Activated CD8-positive, alpha-beta memory T cell treated with anti-CD3 and anti-CD28 coated beads, Interleukin-2, amount 10 ng/mL, durations not matched to agents 7 days and 5 days (primary cell): ENCODE measurements at regions of chr5 and their contacts with region 1.

Region 1: GRCh38 chr5:87069974-87070624 is 197.6 kb upstream of the RASA1 start:
- DNase-seq: peak; percentile 43
- ATAC-seq: no peak
- H3K4me3 Mint-ChIP-seq: no peak overlapping the region
- H3K27ac Mint-ChIP-seq: peak overlapping the region; percentile 51
- H3K4me1 Mint-ChIP-seq: peaks cover 29% of the 10 kb centered on the region
- H3K27me3 Mint-ChIP-seq: no peaks in the 10 kb centered on the region

Region 2: GRCh38 chr5:86964889-86965288 is 105.2 kb before region 1 on chr5:
- CTCF ChIA-PET with region 1: no interaction called
- DNase-seq: no peak
- ATAC-seq: no peak
- H3K4me3 Mint-ChIP-seq: no peak overlapping the region
- H3K27ac Mint-ChIP-seq: no peak overlapping the region
- H3K4me1 Mint-ChIP-seq: peaks cover 4% of the 10 kb centered on the region
- H3K27me3 Mint-ChIP-seq: peaks cover 4% of the 10 kb centered on the region

Region 3: DNA sequence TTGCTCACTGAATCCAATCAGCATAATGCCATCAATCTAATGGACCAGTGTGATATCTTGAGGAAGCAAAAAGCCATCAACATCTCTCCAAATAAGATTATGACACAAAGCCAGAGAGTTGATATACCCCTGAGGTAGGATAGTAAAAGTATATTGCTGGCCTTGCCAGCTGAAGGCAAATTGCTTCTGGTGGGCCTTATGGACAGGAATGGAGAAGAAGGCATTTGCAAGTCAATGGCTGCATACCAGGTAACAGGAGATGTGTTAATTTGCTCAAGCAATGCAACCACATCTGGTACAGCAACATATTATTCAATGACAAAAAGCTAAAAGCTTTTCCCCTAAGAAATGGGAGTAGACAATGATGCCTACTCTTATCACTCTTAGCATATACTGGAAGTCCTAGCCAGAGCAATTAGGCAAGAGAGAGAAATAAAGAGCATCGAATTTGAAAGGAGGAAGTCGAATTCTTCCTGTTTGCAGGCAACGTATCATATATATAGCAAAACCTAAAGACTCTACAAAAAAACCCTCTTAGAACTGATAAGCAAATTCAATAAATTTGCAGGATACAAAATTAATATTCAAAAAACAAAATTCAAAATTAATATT is 18.5 kb before region 1 on chr5:
- CTCF ChIA-PET with region 1: no interaction called
- DNase-seq: no peak
- ATAC-seq: no peak
- H3K4me3 Mint-ChIP-seq: no peak overlapping the region
- H3K27ac Mint-ChIP-seq: no peak overlapping the region
- H3K4me1 Mint-ChIP-seq: no peaks in the 10 kb centered on the region
- H3K27me3 Mint-ChIP-seq: no peaks in the 10 kb centered on the region

Region 4: GRCh38 chr5:87121304-87122150 is 51.4 kb after region 1 on chr5:
- CTCF ChIA-PET with region 1: interaction called, 13 read pairs
- DNase-seq: peak; percentile 70
- ATAC-seq: peak; percentile 87
- H3K4me3 Mint-ChIP-seq: peak overlapping the region; percentile 54
- H3K27ac Mint-ChIP-seq: peak overlapping the region; percentile 93
- H3K4me1 Mint-ChIP-seq: peaks cover 58% of the 10 kb centered on the region
- H3K27me3 Mint-ChIP-seq: no peaks in the 10 kb centered on the region